ENCODE measurements at regions of chr3 and their contacts with region 1.

Region 1: DNA sequence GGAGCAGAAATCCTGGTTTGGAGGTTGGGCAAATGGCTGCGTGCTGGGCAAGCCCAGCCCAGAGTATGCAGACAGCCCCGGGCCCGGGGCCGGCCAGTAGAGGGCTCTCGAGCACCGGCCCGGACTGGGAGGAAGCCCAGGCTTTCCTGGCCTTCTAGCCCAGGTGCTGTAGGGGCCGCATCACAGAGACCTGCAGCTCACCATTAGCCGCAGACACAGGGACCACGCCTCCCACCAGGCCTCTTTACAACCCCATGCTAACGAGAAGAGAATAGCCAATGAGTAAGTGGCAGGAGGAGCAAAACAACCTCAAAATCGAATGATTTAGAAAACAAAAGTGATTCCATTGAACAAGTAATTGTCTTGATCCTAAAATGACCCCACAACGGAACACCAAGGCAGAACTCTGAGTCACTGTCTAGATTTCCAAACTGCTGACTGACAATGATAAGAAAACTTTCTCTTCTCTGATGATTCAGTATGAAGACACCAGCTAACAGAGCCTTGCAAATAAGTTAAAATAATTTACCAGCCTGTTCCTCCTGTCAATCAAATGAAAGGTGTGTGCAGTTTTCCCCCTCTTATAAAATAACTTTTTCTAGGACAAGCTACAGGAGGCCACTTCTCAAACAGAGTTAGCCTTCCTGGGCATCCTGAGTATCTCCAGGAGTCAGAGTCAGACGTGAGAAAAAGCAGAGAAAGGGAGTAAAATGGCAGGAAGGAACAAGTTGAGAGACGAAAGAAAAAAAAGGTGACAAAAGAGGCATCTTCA is 102.2 kb downstream of the DGKG start:
- DNase-seq: peak; percentile 74 to 82
- H3K4me3 ChIP-seq: no peak overlapping the region
- H3K27ac ChIP-seq: no peak overlapping the region
- H3K4me1 ChIP-seq: peaks cover 0 to 5% of the 10 kb centered on the region in 2 donors
- H3K27me3 ChIP-seq: no peaks in the 10 kb centered on the region
- CTCF ChIP-seq: peak; percentile 61 to 97 (median 79)
- POLR2A ChIP-seq: no peak

Region 2: GRCh38 chr3:185900226-185900625 is 359.6 kb before region 1 on chr3:
- intact Hi-C with region 1: no loop called
- DNase-seq: peak; percentile 82 to 83
- H3K4me3 ChIP-seq: no peak overlapping the region
- H3K27ac ChIP-seq: no peak overlapping the region
- H3K4me1 ChIP-seq: no peaks in the 10 kb centered on the region
- H3K27me3 ChIP-seq: no peaks in the 10 kb centered on the region
- CTCF ChIP-seq: no peak
- POLR2A ChIP-seq: no peak

Region 3: GRCh38 chr3:186079925-186080324 is 179.9 kb before region 1 on chr3:
- intact Hi-C with region 1: no loop called
- DNase-seq: no peak
- H3K4me3 ChIP-seq: no peak overlapping the region
- H3K27ac ChIP-seq: no peak overlapping the region
- H3K4me1 ChIP-seq: peaks cover 0 to 4% of the 10 kb centered on the region in 2 donors
- H3K27me3 ChIP-seq: no peaks in the 10 kb centered on the region
- CTCF ChIP-seq: no peak
- POLR2A ChIP-seq: no peak

Region 4: DNA sequence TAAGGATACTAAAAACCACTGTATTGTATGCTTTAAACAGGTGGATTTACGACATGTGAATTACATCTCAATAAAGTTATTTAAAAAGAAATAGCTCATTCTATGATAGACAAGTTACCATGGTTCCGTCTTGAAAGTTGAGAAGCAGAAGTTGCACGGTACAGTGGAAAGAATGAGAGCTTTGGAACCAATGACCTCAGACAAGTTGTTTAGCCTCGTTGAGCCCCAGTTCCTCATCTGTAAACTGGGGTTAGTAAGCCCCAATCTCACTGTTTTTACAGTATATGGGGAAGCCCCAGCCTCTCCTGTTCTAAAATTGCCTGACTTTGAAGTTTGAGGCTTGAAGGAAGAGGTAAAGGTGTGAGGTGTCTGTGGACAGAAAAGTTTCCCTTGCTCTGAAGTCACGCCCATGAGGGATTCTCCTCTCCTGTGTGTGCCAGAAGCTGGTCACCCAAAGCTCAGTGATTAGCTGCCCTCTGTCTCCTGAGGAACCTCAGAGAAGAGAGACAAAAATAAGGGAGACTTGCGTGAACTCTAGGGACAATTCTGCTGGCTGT is 274.4 kb after region 1 on chr3:
- intact Hi-C with region 1: loop called (anchors 5 kb)
- DNase-seq: no peak
- H3K4me3 ChIP-seq: no peak overlapping the region
- H3K27ac ChIP-seq: no peak overlapping the region
- H3K4me1 ChIP-seq: peaks cover 0 to 9% of the 10 kb centered on the region in 2 donors
- H3K27me3 ChIP-seq: no peaks in the 10 kb centered on the region
- CTCF ChIP-seq: no peak
- POLR2A ChIP-seq: no peak

Region 5: GRCh38 chr3:186540221-186540834 is 280.5 kb after region 1 on chr3:
- intact Hi-C with region 1: loop called (anchors 5 kb)
- DNase-seq: peak; percentile 83 to 87
- H3K4me3 ChIP-seq: no peak overlapping the region
- H3K27ac ChIP-seq: no peak overlapping the region
- H3K4me1 ChIP-seq: peaks cover 3 to 9% of the 10 kb centered on the region in 2 donors
- H3K27me3 ChIP-seq: no peaks in the 10 kb centered on the region
- CTCF ChIP-seq: peak; percentile 17 to 94 (median 70)
- POLR2A ChIP-seq: no peak

Measured in thyroid gland (tissue), 4 donors.